ENCODE measurements at regions of chr1 and their contacts with region 1.

Region 1: DNA sequence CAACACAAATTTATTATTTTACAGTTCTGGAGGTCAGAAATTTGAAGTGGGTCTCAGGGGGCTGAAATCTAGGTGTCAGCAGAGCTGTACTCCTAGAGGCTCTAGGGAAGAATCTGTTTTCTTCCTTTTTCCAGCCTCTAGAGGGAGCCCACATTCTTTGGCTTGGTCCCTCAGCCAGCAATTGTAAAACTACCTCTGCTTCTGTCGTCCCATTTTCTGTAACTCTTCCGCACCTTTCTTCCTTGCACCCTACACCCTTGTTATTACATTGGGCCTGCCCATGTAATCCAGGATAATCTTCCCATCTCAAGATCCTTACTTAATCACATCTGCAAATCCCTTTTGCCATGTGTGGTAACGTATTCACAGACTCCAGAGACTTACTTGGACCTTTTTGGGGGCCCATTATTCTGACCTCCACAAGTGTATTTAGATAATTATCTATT is 24.8 kb upstream of the THEM4 start:
- DNase-seq: peak; percentile 52
- H3K4me3 ChIP-seq: peak overlapping the region in 1 of 2 experiments; percentile 43; a peak in 1 of 4 replicates
- H3K27ac ChIP-seq: no peak overlapping the region
- H3K4me1 ChIP-seq: no peaks in the 10 kb centered on the region
- H3K27me3 ChIP-seq: peaks cover 20% of the 10 kb centered on the region
- CTCF ChIP-seq: peak; percentile 91
- EP300 ChIP-seq: no peak
- RAD21 ChIP-seq: peak; percentile 90

Region 2: GRCh38 chr1:151945725-151946364 is 11.8 kb after region 1 on chr1:
- CTCF ChIA-PET with region 1: interaction called, 23 read pairs
- POLR2A ChIA-PET with region 1: no interaction called
- DNase-seq: peak; percentile 40
- H3K4me3 ChIP-seq: no peak overlapping the region
- H3K27ac ChIP-seq: peak overlapping the region in 1 of 2 experiments; percentile 63; a peak in 2 of 4 replicates
- H3K4me1 ChIP-seq: peaks cover 1 to 6% of the 10 kb centered on the region in 2 experiments; a peak in 2 of 4 replicates
- H3K27me3 ChIP-seq: no peaks in the 10 kb centered on the region; the same call in 1 of the 2 replicates
- CTCF ChIP-seq: no peak
- EP300 ChIP-seq: peak in 1 of 2 experiments; percentile 43; a peak in 1 of 4 replicates
- RAD21 ChIP-seq: no peak

Region 3: DNA sequence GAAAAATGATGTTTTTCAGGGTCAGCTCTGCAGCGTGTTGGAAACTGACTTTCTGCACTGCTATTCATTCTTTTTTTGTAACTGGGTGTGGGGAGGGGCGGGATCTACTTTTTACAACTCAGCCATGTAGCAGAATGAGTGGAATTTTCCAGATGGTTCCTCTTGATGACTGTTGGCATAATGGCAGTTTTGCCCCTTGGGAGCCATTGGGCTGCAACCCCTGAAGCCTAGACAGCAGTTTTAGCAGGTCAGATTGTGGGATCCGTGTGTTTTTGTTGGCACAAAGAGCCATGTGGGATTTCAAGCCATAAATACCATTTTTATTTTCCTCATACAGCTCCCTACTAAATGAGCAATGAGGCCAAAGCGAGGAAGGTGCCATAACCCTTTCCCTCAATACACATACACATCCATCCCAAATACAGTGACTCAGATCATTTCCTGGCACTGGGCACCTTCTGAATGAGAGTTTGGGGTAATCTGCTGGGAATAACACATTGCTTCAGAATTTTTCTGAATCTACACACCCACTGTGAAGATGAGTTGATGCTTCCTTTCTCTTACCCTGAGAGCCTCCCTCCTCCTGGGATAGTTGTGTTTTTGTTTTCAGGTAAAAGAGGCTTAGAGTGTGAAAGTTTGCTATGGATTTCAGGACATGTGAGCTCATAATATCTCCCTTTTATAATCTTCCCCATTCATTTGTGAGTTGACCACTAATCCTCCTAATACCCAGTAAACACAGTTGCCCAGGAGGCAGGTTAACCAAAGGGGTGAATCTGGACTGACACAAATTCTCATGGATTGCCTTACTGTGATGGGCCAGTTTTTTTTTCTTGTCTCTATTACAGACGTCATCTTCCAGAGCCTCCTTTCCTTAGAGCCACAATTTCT is 46.5 kb after region 1 on chr1:
- CTCF ChIA-PET with region 1: interaction called, 10 read pairs
- POLR2A ChIA-PET with region 1: no interaction called
- DNase-seq: no peak
- H3K4me3 ChIP-seq: no peak overlapping the region
- H3K27ac ChIP-seq: peak overlapping the region; percentile 50 to 73
- H3K4me1 ChIP-seq: peaks cover 4 to 32% of the 10 kb centered on the region in 2 experiments; a peak in 3 of 4 replicates
- H3K27me3 ChIP-seq: no peaks in the 10 kb centered on the region
- CTCF ChIP-seq: no peak
- EP300 ChIP-seq: no peak
- RAD21 ChIP-seq: no peak